Heart right ventricle (tissue), 16 donors: ENCODE measurements at regions of chr7 and their contacts with region 1.

Region 1: DNA sequence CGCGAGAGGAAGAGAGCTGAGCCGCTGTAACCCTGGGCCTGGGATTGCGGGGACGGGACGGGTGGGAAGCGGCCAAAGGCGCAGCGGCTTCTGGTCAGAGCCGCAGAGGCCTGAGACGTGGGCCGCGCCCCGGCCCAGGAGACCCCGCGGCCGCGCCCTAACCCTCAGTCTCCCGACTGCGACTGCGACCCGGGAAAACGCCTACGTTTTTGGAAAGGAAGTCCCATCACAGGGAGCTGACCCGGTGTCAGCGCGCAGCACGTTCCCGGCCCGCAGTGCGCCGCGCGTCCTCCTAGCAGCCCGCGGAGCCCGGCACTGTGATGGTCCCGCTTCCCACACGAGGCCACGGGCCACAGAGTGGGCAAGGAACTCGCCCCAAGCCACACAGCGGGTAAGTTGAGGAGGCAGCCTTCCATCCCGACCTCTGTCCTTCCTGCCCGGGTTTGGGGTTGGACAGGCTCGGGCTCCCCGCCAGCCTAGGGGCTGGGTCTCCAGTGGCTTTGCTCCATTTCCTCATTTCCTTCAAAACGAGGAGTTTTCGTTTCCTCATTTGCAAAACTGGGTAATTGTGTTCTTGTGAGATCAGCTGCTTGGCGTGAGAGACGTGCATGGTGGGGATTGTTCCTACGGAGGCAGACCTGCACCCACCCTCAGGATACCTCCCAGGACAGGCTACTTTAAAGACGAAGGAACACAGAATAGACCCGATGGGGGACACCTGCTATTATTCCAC is 1.2 kb downstream of the GPNMB start:
- DNase-seq: peak; percentile 40 to 55
- ATAC-seq: peak; percentile 76 to 87 (median 79)
- H3K4me3 ChIP-seq: peak overlapping the region; percentile 43 to 66 (median 60)
- H3K27ac ChIP-seq: peak overlapping the region; percentile 55 to 91 (median 82)
- H3K4me1 ChIP-seq: peaks cover 0 to 42% (median 23%) of the 10 kb centered on the region in 9 donors
- H3K27me3 ChIP-seq: peaks cover 0 to 15% (median 0%) of the 10 kb centered on the region in 7 donors
- CTCF ChIP-seq: no peak

Region 2: GRCh38 chr7:23181684-23182553 is 65.8 kb before region 1 on chr7 and contains the start of gene NUP42:
- intact Hi-C with region 1: loop called in 3 of 10 experiments (anchors 5 kb)
- DNase-seq: peak; percentile 92 to 96
- ATAC-seq: peak; percentile 94 to 99 (median 97)
- H3K4me3 ChIP-seq: peak within 1 kb of the TSS; percentile 56 to 87 (median 76)
- H3K27ac ChIP-seq: peak within 1 kb of the TSS; percentile 59 to 94 (median 91)
- H3K4me1 ChIP-seq: peaks cover 0 to 49% (median 31%) of the 10 kb centered on the region in 9 donors
- H3K27me3 ChIP-seq: no peaks in the 10 kb centered on the region
- CTCF ChIP-seq: no peak
- total RNA-seq, gene NUP42: 14.7 to 25.1 (median 19.7) TPM

Region 3: GRCh38 chr7:23191021-23191420 is 56.7 kb before region 1 on chr7:
- intact Hi-C with region 1: loop called in 4 of 10 experiments (anchors 5 to 10 kb)
- DNase-seq: no peak
- ATAC-seq: peak in 2 of 8 donors; percentile 14 to 28
- H3K4me3 ChIP-seq: no peak overlapping the region
- H3K27ac ChIP-seq: no peak overlapping the region
- H3K4me1 ChIP-seq: peaks cover 0 to 20% (median 0%) of the 10 kb centered on the region in 9 donors
- H3K27me3 ChIP-seq: no peaks in the 10 kb centered on the region
- CTCF ChIP-seq: no peak

Region 4: DNA sequence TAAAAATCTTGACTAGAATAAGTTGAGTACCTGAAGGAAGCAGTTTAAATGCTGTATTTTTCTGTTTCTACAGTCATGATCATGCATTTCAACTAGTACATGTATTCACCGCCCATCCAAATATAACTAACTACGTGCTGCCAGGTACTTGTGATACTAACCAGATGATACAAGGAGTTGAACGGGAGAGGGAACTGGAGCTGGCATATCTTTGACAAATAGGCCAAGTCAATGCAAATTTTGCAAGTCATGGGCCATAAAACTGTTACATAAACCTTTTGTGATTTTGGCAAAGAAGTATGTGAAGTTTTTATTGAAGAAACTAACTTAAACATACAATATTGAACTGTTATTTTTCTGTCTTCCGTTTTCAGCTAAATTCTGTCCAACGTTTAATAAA is 51.5 kb before region 1 on chr7:
- intact Hi-C with region 1: loop called in 4 of 10 experiments (anchors 5 to 10 kb)
- DNase-seq: no peak
- ATAC-seq: peak in 6 of 8 donors; percentile 70 to 93 (median 86)
- H3K4me3 ChIP-seq: no peak overlapping the region
- H3K27ac ChIP-seq: peak overlapping the region in 7 of 10 donors; percentile 2 to 70 (median 62)
- H3K4me1 ChIP-seq: peaks cover 0 to 22% (median 0%) of the 10 kb centered on the region in 9 donors
- H3K27me3 ChIP-seq: no peaks in the 10 kb centered on the region
- CTCF ChIP-seq: no peak

Region 5: GRCh38 chr7:23205909-23206767 is 41.6 kb before region 1 on chr7:
- intact Hi-C with region 1: loop called in 2 of 10 experiments (anchors 5 kb)
- DNase-seq: peak in 1 of 2 donors; percentile 31
- ATAC-seq: peak; percentile 30 to 84 (median 66)
- H3K4me3 ChIP-seq: peak overlapping the region in 8 of 10 donors; percentile 10 to 49 (median 45)
- H3K27ac ChIP-seq: peak overlapping the region in 6 of 10 donors; percentile 19 to 86 (median 60)
- H3K4me1 ChIP-seq: peaks cover 0 to 22% (median 0%) of the 10 kb centered on the region in 9 donors
- H3K27me3 ChIP-seq: peaks cover 0 to 6% (median 0%) of the 10 kb centered on the region in 7 donors
- CTCF ChIP-seq: no peak

Region 6: GRCh38 chr7:23334482-23335056 is 86.8 kb after region 1 on chr7:
- intact Hi-C with region 1: no loop called
- DNase-seq: peak in 1 of 2 donors; percentile 5
- ATAC-seq: peak in 5 of 8 donors; percentile 9 to 51 (median 30)
- H3K4me3 ChIP-seq: no peak overlapping the region
- H3K27ac ChIP-seq: peak overlapping the region in 6 of 10 donors; percentile 7 to 63 (median 50)
- H3K4me1 ChIP-seq: peaks cover 0 to 41% (median 32%) of the 10 kb centered on the region in 9 donors
- H3K27me3 ChIP-seq: peaks cover 0 to 9% (median 0%) of the 10 kb centered on the region in 7 donors
- CTCF ChIP-seq: no peak